Gastrocnemius medialis (tissue), 4 donors: ENCODE measurements at regions of chr11 and their contacts with region 1.

Region 1: GRCh38 chr11:3929649-3930048 is 74.2 kb downstream of the STIM1 start:
- DNase-seq: peak; percentile 70 to 81
- ATAC-seq: peak; percentile 96
- H3K4me3 ChIP-seq: no peak overlapping the region
- H3K27ac ChIP-seq: peak overlapping the region; percentile 81 to 92 (median 87)
- H3K4me1 ChIP-seq: peaks cover 75 to 80% of the 10 kb centered on the region in 2 donors
- H3K27me3 ChIP-seq: no peaks in the 10 kb centered on the region
- CTCF ChIP-seq: no peak
- POLR2A ChIP-seq: peak; percentile 20 to 31

Region 2: GRCh38 chr11:4032122-4032521 is 102.5 kb after region 1 on chr11:
- in situ Hi-C with region 1: no loop called
- intact Hi-C with region 1: no loop called
- DNase-seq: no peak
- ATAC-seq: no peak
- H3K4me3 ChIP-seq: no peak overlapping the region
- H3K27ac ChIP-seq: no peak overlapping the region
- H3K4me1 ChIP-seq: peaks cover 0 to 8% of the 10 kb centered on the region in 2 donors
- H3K27me3 ChIP-seq: no peaks in the 10 kb centered on the region
- CTCF ChIP-seq: no peak
- POLR2A ChIP-seq: no peak

Region 3: GRCh38 chr11:4044976-4045646 is 115.5 kb after region 1 on chr11:
- in situ Hi-C with region 1: no loop called
- intact Hi-C with region 1: loop called (anchors 2 kb)
- DNase-seq: peak in 1 of 2 donors; percentile 36
- ATAC-seq: peak in 1 of 2 donors; percentile 3
- H3K4me3 ChIP-seq: no peak overlapping the region
- H3K27ac ChIP-seq: peak overlapping the region; percentile 78 to 91 (median 88)
- H3K4me1 ChIP-seq: peaks cover 29 to 57% of the 10 kb centered on the region in 2 donors
- H3K27me3 ChIP-seq: no peaks in the 10 kb centered on the region
- CTCF ChIP-seq: no peak
- POLR2A ChIP-seq: no peak

Region 4: DNA sequence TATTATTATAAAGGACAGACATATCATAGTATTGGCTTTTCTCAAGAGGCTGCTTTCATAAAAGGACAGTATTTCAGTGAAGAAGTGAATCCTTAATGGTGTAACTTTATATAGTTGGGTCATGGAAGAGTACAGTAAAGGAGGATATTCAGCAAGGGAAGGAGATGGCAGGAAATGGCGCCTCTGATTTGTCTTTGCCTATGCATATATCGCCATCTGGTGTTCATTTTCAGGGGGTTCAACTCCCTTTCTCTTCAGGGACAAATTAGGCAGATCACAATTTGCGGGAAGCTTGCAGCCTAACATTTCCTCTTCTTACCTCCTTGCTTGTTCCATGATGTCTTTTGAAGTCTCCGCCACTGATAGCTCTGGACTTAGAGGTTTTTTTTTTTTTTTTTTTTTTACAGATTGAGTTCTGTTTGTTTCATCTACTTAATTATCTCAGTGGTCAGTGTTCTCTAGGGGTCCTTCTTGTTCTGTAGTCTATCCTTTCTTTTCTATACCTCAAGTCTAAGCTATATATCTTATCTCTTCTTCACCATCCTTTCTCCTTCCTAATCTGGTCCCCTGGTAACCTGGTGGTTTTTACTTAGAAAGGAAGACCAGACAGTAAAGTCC is 143.1 kb after region 1 on chr11:
- in situ Hi-C with region 1: no loop called
- intact Hi-C with region 1: loop called (anchors 2 kb)
- DNase-seq: peak; percentile 53 to 55
- ATAC-seq: peak; percentile 82 to 85
- H3K4me3 ChIP-seq: no peak overlapping the region
- H3K27ac ChIP-seq: peak overlapping the region; percentile 42 to 73 (median 56)
- H3K4me1 ChIP-seq: peaks cover 35 to 54% of the 10 kb centered on the region in 2 donors
- H3K27me3 ChIP-seq: no peaks in the 10 kb centered on the region
- CTCF ChIP-seq: peak; percentile 83 to 94 (median 89)
- POLR2A ChIP-seq: no peak